Activated CD8-positive, alpha-beta memory T cell treated with anti-CD3 and anti-CD28 coated beads, Interleukin-2, amount 10 ng/mL, durations not matched to agents 7 days and 5 days (primary cell): ENCODE measurements at regions of chr1 and their contacts with region 1.

Region 1: DNA sequence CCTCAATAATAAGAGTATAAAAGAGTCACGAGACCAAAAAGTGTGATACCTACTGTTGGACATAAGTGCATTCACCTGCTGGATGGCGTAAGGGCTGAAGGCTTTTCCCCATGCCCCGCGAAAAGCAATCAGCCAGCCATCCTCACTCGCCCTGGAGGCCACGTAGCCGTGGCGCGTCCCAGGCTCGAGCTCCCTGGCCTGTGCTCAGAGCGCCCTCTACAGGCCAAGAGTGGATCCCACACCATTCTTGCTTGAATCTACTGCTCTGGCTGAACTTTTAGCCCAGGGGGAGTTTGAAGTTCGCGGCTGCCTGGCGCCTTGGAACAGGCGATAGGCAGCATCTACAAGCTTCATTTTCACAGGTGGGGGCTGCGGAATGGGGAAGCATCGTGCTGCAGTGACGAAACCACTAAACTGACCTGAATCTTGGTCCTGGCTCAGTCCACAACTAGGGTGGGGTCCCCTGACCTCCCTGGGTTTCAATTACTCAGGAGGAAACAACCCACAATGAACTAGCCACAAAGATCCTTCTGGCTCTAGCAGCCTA is 70.3 kb upstream of the SERBP1 start:
- DNase-seq: peak; percentile 91
- ATAC-seq: peak; percentile 99
- H3K4me3 Mint-ChIP-seq: no peak overlapping the region
- H3K27ac Mint-ChIP-seq: no peak overlapping the region
- H3K4me1 Mint-ChIP-seq: peaks cover 5% of the 10 kb centered on the region
- H3K27me3 Mint-ChIP-seq: peaks cover 8% of the 10 kb centered on the region

Region 2: GRCh38 chr1:67149179-67149770 is 351.2 kb before region 1 on chr1:
- CTCF ChIA-PET with region 1: interaction called, 10 read pairs
- DNase-seq: peak; percentile 72
- ATAC-seq: peak; percentile 88
- H3K4me3 Mint-ChIP-seq: no peak overlapping the region
- H3K27ac Mint-ChIP-seq: no peak overlapping the region
- H3K4me1 Mint-ChIP-seq: peaks cover 24% of the 10 kb centered on the region
- H3K27me3 Mint-ChIP-seq: peaks cover 38% of the 10 kb centered on the region

Region 3: GRCh38 chr1:67285780-67286488 is 214.6 kb before region 1 on chr1:
- CTCF ChIA-PET with region 1: interaction called, 14 read pairs
- DNase-seq: no peak
- ATAC-seq: peak; percentile 82
- H3K4me3 Mint-ChIP-seq: no peak overlapping the region
- H3K27ac Mint-ChIP-seq: no peak overlapping the region
- H3K4me1 Mint-ChIP-seq: peaks cover 19% of the 10 kb centered on the region
- H3K27me3 Mint-ChIP-seq: peaks cover 9% of the 10 kb centered on the region

Region 4: DNA sequence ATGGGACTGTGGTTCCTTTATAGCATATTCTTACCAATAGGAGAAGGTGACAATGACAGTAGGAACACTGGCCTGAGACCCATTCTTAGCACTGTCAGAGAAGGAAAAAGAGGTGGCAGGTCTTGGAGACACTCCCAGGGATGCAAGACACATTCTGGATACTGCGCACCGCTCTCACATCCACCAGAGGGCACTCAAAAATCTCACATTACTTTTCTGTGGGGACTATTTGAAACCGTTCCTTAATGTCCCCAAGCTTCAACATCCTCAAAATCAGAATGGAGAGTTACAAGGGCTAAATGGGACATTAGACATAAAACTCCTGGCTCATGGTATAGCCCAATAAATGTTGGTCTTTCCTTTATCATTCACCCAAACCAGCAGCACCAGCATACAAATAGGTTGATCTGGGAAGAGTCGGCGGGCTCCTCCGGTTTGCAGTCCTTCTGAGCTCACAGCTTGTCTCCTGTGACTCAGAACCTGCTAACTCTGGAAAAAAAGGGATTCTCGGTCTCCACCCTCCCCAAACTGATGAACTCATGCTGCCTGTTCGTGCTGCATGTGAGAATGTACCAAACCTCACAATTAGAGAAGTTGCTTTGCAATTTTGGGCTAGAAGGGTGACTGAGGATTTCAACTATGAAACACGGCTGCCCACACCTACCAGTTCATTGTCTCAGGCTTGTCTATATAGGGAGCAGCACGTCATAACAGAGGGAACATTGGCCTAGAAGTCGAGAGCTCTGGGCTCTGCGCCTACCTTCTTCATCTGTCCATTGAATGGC is 152.6 kb before region 1 on chr1:
- CTCF ChIA-PET with region 1: interaction called, 30 read pairs
- DNase-seq: peak; percentile 50
- ATAC-seq: no peak
- H3K4me3 Mint-ChIP-seq: no peak overlapping the region
- H3K27ac Mint-ChIP-seq: no peak overlapping the region
- H3K4me1 Mint-ChIP-seq: peaks cover 17% of the 10 kb centered on the region
- H3K27me3 Mint-ChIP-seq: no peaks in the 10 kb centered on the region

Region 5: DNA sequence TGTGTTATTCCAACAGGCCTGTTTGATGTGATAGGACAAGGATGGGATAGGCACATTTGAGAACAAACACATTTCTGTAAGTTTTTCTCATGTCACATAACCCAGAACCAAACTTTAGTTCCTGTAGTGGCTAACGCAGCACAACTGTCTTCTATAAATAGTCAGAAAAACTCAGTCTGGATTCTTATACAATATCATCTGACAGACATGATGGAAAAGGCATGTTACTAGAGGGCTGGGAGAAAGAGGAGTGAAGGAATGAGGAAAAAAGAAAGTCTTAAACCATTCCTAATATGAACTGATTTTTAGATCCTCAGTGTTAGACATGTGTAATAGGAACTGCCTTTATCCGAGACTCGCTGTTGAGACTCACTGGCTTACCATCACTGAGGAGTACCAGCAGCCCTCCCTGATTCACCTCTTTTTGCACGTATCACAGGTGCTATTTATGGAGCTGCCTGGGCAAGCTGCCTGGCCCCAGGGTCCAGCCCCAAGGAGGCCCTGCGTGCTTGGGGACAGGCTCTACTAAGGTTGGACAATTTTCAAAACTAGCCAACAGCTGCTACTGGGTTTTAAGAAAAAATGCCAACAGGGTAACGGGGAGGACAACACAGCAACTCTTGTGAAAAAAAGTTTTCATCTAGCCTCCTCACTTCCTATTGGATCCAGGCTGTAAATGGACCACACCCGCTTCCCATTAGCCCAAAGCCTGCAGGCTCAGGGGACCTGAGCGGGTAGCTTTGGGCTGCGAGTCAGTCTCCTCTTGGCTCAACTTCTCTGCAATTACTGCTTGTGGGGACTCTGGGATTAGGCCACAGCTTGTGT is 39.6 kb before region 1 on chr1:
- CTCF ChIA-PET with region 1: interaction called, 10 read pairs
- DNase-seq: no peak
- ATAC-seq: no peak
- H3K4me3 Mint-ChIP-seq: no peak overlapping the region
- H3K27ac Mint-ChIP-seq: no peak overlapping the region
- H3K4me1 Mint-ChIP-seq: no peaks in the 10 kb centered on the region
- H3K27me3 Mint-ChIP-seq: no peaks in the 10 kb centered on the region